Activated T-helper 2 cell treated with anti-CD3 and anti-CD28 coated beads, Interferon-gamma antibody, Interleukin-2, Interleukin-4, amounts not matched to agents 10 μg/mL and 5 μg/mL and 100 μg/mL, durations not matched to agents 14 hours and 24 hours and 36 hours (primary cell): ENCODE measurements at regions of chr12 and their contacts with region 1.

Region 1: DNA sequence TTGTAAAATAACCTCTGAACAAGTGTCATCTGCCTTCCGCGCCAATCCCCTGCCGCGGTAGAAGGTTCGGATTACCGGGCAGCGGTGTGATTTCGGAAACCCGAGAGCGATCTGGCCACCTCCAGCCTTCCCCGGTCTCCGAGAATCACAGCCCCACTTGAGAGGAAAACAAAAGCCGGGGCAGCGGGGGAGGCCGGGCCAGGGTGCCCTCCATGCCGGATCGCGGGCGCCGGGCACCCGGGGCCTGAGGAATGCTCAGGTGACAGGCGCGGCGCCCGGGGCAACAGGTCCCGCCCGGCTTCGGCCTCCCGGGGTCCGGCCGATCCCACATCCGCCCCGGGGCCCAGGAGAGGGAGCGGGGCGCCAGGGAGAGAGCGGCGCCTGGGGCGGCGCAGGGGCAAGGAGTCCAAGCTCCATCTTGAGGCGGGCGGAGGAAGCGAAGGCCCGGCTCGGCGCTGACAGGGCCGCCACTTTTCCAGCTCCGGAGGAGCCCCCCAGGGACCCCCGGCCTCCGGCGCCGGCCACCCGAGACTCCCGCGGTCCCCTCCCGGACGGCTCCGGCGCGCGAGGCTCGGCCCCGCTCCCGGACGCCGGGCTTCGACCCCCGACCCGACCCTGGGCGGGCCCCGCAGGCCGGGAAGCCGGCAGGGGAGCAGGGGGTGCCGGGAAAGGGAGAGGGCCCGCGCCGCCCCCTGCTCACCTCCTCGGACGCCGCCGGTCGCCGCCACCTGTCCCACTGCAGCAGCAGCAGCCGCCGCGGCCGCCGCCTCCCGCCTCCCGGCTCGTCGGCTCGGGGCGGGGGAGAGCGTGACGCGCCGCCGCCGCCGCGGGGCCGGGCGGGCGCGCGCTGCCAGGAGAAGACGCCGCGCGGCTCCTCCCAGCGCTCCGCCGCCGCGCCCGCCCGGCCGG is at the start of gene CLIP1:
- DNase-seq: peak; percentile 56
- H3K4me3 Mint-ChIP-seq: peak within 1 kb of the TSS; percentile 86
- H3K27ac Mint-ChIP-seq: peak within 1 kb of the TSS; percentile 88
- H3K4me1 Mint-ChIP-seq: peaks cover 25% of the 10 kb centered on the region
- H3K27me3 Mint-ChIP-seq: peaks cover 2% of the 10 kb centered on the region
- total RNA-seq, gene CLIP1: 59.9 and 66.2 TPM in 2 replicates

Region 2: GRCh38 chr12:122293081-122293480 is 129.0 kb before region 1 on chr12:
- intact Hi-C with region 1: no loop called
- DNase-seq: no peak
- H3K4me3 Mint-ChIP-seq: no peak overlapping the region
- H3K27ac Mint-ChIP-seq: peak overlapping the region; percentile 63
- H3K4me1 Mint-ChIP-seq: peaks cover 10% of the 10 kb centered on the region
- H3K27me3 Mint-ChIP-seq: no peaks in the 10 kb centered on the region

Region 3: GRCh38 chr12:122449353-122449752 is 27.3 kb after region 1 on chr12:
- intact Hi-C with region 1: loop called (anchors 2 kb)
- DNase-seq: no peak
- H3K4me3 Mint-ChIP-seq: no peak overlapping the region
- H3K27ac Mint-ChIP-seq: no peak overlapping the region
- H3K4me1 Mint-ChIP-seq: peaks cover 26% of the 10 kb centered on the region
- H3K27me3 Mint-ChIP-seq: no peaks in the 10 kb centered on the region

Region 4: DNA sequence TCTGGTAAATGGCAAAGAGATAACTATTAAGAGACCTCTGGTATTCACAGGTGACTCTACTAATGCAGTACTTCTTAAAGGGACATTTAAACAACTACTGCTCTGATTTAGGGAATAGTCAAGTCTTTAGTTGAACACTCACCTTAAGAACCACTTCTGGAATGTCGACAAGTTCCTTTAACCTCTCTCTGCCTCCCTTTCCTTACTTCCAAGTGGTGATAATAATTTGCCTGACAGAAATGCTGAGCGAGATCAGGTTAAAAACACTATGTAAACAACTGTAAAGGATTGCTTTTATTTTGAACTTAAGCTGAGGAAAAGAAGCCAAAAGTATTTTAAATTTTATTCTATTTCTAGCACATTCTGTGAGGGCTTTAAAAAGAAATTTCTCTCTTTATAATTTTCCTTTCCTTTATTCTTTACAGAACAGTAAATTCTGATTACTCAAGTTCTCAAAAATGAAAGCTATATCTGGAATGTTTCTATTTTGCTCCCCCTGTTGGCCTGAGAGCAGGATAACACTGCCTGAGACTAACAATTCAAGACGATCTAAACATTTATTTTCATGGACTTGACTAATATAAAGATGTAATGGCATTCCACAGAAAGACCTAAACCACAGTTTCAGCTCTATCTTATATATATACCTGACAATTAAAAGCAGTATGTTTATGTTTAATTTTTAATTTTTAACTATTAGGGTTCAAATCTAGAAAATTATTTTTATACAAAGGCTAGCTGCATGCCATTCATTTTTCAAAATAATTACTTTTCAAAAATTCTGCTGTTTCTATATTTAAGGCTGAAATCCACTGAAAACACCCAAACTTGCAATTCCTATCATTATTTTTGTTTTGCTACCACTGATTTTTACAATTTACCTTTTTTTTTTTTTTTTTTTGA is 49.5 kb after region 1 on chr12:
- intact Hi-C with region 1: loop called (anchors 1 kb)
- DNase-seq: no peak
- H3K4me3 Mint-ChIP-seq: no peak overlapping the region
- H3K27ac Mint-ChIP-seq: no peak overlapping the region
- H3K4me1 Mint-ChIP-seq: peaks cover 24% of the 10 kb centered on the region
- H3K27me3 Mint-ChIP-seq: no peaks in the 10 kb centered on the region